ENCODE measurements at regions of chr2 and their contacts with region 1.

Region 1: DNA sequence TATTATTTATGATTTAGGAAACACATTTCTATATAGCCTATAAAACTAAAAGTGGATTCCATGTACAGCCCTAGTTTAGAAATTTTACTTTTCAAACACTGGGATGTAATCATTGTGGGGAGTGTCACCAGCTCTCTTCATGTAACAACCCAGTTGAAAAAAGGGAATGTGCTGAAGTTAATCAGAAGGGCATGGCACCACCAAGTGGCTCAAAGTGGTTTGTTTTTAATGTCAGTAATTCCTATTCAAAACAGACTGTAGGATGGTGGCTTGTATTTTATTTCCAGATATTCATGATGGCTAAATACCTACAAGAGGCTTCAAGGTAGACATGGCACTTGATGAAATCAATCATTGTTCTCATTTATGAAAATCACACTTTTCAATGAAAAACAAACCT is 58.1 kb upstream of the TMEM182 start:
- DNase-seq: peak in 1 of 14 experiments; percentile 17
- ATAC-seq: peak; percentile 24
- H3K4me3 ChIP-seq: no peak overlapping the region
- H3K4me3 Mint-ChIP-seq: no peak overlapping the region
- H3K27ac ChIP-seq: no peak overlapping the region
- H3K27ac Mint-ChIP-seq: no peak overlapping the region
- H3K4me1 ChIP-seq: no peaks in the 10 kb centered on the region
- H3K4me1 Mint-ChIP-seq: no peaks in the 10 kb centered on the region
- H3K27me3 ChIP-seq: no peaks in the 10 kb centered on the region
- H3K27me3 Mint-ChIP-seq: no peaks in the 10 kb centered on the region
- CTCF ChIP-seq: peak; percentile 47

Region 2: GRCh38 chr2:100813527-100813926 is 1890.2 kb before region 1 on chr2:
- CTCF ChIA-PET with region 1: no interaction called
- POLR2A ChIA-PET with region 1: no interaction called
- intact Hi-C with region 1: no loop called
- DNase-seq: peak in 2 of 14 experiments; percentile 5 to 30
- ATAC-seq: peak; percentile 65
- H3K4me3 ChIP-seq: no peak overlapping the region
- H3K4me3 Mint-ChIP-seq: peak overlapping the region; percentile 9
- H3K27ac ChIP-seq: no peak overlapping the region
- H3K27ac Mint-ChIP-seq: peak overlapping the region; percentile 21
- H3K4me1 ChIP-seq: peaks cover 14% of the 10 kb centered on the region
- H3K4me1 Mint-ChIP-seq: peaks cover 28% of the 10 kb centered on the region
- H3K27me3 ChIP-seq: no peaks in the 10 kb centered on the region
- H3K27me3 Mint-ChIP-seq: peaks cover 11% of the 10 kb centered on the region
- CTCF ChIP-seq: no peak

Region 3: DNA sequence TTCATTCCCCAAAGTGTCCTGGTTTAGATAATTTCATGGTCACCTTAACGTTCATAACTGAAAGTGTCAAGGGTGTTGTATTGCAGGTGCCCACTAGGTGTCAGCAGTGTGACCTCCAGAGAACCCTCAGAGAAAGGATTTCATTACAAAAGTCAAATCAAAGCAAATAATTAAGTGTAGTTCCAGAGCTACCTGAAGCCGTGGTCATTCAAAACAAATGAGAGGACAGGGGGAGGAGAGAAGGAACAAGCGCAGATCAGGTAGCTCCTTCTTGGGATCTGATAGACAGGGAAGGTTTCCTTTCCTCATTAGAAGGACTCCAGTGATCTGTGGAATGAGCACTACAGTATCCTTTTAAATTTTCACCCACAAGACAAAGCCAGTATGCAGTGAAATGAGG is 230.7 kb before region 1 on chr2 and contains the start of gene SLC9A4:
- CTCF ChIA-PET with region 1: no interaction called
- POLR2A ChIA-PET with region 1: no interaction called
- intact Hi-C with region 1: loop called (anchors 1 to 2 kb)
- DNase-seq: peak in 13 of 14 experiments; percentile 6 to 66 (median 36)
- ATAC-seq: peak; percentile 70
- H3K4me3 ChIP-seq: no peak within 1 kb of the TSS
- H3K4me3 Mint-ChIP-seq: no peak within 1 kb of the TSS
- H3K27ac ChIP-seq: no peak within 1 kb of the TSS
- H3K27ac Mint-ChIP-seq: no peak within 1 kb of the TSS
- H3K4me1 ChIP-seq: no peaks in the 10 kb centered on the region
- H3K4me1 Mint-ChIP-seq: no peaks in the 10 kb centered on the region
- H3K27me3 ChIP-seq: peaks cover 0 to 20% of the 10 kb centered on the region in 2 experiments
- H3K27me3 Mint-ChIP-seq: peaks cover 20% of the 10 kb centered on the region
- CTCF ChIP-seq: peak; percentile 94
- total RNA-seq, gene SLC9A4: not detected

Region 4: GRCh38 chr2:102520028-102520427 is 183.7 kb before region 1 on chr2:
- CTCF ChIA-PET with region 1: no interaction called
- POLR2A ChIA-PET with region 1: no interaction called
- intact Hi-C with region 1: loop called (anchors 2 to 5 kb)
- DNase-seq: peak in 3 of 14 experiments; percentile 32 to 41 (median 32)
- ATAC-seq: no peak
- H3K4me3 ChIP-seq: no peak overlapping the region
- H3K4me3 Mint-ChIP-seq: no peak overlapping the region
- H3K27ac ChIP-seq: no peak overlapping the region
- H3K27ac Mint-ChIP-seq: no peak overlapping the region
- H3K4me1 ChIP-seq: no peaks in the 10 kb centered on the region
- H3K4me1 Mint-ChIP-seq: no peaks in the 10 kb centered on the region
- H3K27me3 ChIP-seq: no peaks in the 10 kb centered on the region
- H3K27me3 Mint-ChIP-seq: peaks cover 2% of the 10 kb centered on the region
- CTCF ChIP-seq: peak; percentile 28

Region 5: DNA sequence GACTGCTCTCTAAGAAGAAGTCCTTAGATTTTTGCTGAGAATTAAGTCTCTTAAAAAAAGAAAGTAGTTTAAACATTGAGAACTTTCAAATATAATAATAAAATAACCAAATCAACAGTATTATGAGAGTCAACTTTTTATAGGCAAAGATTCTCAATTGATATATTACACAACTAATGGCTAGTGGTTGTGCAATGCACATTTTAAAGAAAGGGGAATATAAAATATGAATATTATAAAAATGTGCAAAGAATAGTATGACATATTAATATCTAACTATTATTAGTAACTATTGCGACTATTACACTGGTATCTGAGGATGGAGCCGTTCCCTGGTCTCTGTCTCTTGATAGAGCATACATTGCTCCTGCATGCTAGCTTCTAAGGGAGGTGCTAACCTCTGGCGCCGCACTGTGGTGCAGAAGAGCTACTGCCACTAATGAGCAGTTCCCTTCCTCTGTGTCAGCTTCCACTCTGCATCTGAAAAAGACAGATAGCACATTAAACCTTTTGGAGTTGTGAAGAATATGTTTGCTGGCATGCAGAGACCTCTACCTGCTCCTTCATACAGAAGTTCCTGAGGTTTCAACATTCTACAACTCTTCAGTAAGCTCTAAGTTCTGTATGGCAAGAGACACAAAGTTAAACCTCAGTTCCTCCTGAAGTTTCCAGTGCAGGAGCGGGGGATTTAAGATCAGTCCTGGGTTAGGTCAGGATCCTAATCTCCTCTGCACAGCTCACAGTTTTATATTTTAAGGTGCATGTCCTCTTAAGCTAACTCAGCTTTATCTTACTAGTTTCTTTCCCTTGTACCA is 87.9 kb before region 1 on chr2:
- CTCF ChIA-PET with region 1: no interaction called
- POLR2A ChIA-PET with region 1: no interaction called
- intact Hi-C with region 1: loop called (anchors 5 to 10 kb)
- DNase-seq: peak in 7 of 14 experiments; percentile 3 to 59 (median 19)
- ATAC-seq: peak; percentile 78
- H3K4me3 ChIP-seq: no peak overlapping the region
- H3K4me3 Mint-ChIP-seq: no peak overlapping the region
- H3K27ac ChIP-seq: no peak overlapping the region
- H3K27ac Mint-ChIP-seq: no peak overlapping the region
- H3K4me1 ChIP-seq: peaks cover 12% of the 10 kb centered on the region
- H3K4me1 Mint-ChIP-seq: peaks cover 15% of the 10 kb centered on the region
- H3K27me3 ChIP-seq: peaks cover 24 to 53% of the 10 kb centered on the region in 2 experiments
- H3K27me3 Mint-ChIP-seq: peaks cover 55% of the 10 kb centered on the region
- CTCF ChIP-seq: peak; percentile 50

Region 6: DNA sequence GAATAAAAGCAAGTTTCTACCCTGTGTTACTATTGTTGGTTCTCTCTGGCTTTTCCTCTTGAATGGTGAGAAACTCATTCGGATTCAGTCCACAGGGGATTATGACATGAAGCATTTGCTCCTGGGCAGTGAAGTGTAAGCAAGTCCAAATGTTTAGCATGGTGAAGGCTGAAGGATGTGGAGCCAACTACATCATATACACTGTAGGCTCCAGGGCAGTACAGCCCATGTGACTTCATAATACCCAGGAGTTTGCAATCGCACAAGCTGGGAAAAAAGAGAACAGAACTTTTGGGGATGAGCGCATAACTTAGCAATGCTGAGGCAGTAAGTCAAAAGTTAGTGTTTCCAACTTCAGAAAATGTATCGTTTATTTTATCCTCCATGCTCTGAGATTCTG is 1454.4 kb after region 1 on chr2:
- CTCF ChIA-PET with region 1: no interaction called
- POLR2A ChIA-PET with region 1: no interaction called
- intact Hi-C with region 1: no loop called
- DNase-seq: no peak
- ATAC-seq: no peak
- H3K4me3 ChIP-seq: no peak overlapping the region
- H3K4me3 Mint-ChIP-seq: no peak overlapping the region
- H3K27ac ChIP-seq: no peak overlapping the region
- H3K27ac Mint-ChIP-seq: no peak overlapping the region
- H3K4me1 ChIP-seq: no peaks in the 10 kb centered on the region
- H3K4me1 Mint-ChIP-seq: no peaks in the 10 kb centered on the region
- H3K27me3 ChIP-seq: no peaks in the 10 kb centered on the region
- H3K27me3 Mint-ChIP-seq: no peaks in the 10 kb centered on the region
- CTCF ChIP-seq: no peak